ENCODE measurements at regions of chr5 and their contacts with region 1.

Region 1: DNA sequence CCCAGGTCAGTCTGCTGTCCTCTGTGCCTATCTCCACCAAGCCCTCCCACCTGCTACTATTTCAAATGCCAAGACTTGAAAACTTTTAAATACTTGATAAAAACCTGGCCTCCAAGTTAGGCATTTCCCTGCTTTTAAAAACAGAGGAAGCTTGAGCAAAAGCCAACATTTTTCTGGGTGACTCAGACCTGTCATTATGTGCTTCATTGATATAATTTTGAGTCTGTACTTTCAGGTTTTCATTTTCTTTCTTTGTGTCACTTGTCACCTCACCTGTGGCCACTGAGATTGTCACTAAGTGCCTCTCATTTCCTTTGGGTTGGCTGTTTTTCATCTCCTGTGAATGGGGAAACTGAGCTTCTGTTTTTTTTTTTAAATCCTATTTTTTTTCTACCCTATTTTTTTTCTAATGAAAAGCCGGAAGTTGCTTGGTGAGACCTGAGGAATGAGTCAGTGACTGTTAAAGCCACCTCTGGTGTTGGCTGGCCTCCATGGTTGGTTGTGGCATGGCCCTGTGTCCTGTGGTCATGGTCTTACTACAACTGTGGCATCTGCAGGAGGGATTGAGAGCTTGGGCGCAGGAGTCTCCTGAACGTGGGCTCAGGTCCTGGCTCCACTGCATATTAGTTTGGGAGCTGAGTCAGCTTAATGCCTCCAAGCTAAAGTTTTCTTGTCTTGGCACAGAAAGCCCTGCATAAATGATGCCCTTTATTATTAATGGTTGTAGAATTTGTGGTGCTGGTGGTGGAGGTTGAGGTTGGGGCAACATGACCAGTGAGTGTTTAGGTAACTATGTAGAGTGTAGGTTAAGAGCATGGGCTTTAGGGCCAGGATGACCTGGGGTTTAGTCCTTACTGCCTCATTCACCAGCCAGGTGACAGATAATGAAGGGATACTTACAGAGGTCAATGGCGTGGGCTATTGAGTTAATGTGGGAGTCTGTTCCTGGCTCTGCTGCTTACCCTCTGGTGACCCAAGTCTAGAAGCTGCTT is 56.9 kb downstream of the ARHGAP26 start:
- DNase-seq: peak; percentile 67
- H3K4me3 Mint-ChIP-seq: no peak overlapping the region
- H3K27ac Mint-ChIP-seq: peak overlapping the region; percentile 76
- H3K4me1 Mint-ChIP-seq: peaks cover 80% of the 10 kb centered on the region
- H3K27me3 Mint-ChIP-seq: no peaks in the 10 kb centered on the region

Region 2: GRCh38 chr5:142769741-142770631 is 57.1 kb before region 1 on chr5 and contains the start of gene ARHGAP26:
- CTCF ChIA-PET with region 1: interaction called, 9 read pairs
- intact Hi-C with region 1: loop called (anchors 1 kb)
- DNase-seq: peak; percentile 94
- H3K4me3 Mint-ChIP-seq: peak within 1 kb of the TSS; percentile 95
- H3K27ac Mint-ChIP-seq: peak within 1 kb of the TSS; percentile 81
- H3K4me1 Mint-ChIP-seq: peaks cover 37% of the 10 kb centered on the region
- H3K27me3 Mint-ChIP-seq: no peaks in the 10 kb centered on the region
- total RNA-seq, gene ARHGAP26: 17.0 to 19.5 TPM

Region 3: DNA sequence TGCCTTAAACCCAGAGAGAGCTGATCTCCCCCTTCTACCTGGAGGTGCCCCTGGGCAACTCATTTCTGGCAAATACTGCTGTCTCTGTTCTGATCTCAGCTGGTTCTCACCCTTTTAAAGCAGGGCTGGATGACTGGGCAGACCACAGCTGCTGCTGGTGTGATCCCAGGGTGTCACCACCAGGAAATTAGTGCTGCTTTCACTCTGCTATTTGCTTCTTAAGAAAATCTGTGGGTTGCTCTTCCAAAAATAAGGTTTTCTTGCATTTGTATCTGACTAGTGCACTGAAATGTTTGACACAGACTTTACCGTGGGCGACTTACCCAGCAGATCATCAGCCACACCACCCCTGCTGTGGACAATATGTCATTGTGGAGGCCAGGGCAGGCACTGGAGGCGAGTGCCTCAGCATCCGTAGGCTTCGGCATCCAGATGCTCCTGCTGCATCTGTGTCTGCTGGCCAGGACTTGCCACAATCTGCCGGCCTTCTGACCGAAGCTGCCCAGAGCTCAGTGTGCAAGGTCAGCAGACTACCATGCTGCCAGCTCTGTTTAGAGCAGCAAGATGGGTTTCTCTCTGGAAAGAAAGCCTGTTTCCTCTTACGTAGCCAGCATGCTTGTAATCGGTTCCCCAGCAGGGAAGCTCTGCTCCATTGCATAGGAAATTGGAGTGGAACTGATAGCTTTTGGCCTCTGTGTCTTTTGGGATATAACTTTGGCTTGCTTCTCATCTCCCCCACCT is 43.3 kb before region 1 on chr5:
- CTCF ChIA-PET with region 1: interaction called, 4 read pairs
- intact Hi-C with region 1: loop called (anchors 1 kb)
- DNase-seq: peak; percentile 88
- H3K4me3 Mint-ChIP-seq: no peak overlapping the region
- H3K27ac Mint-ChIP-seq: peak overlapping the region; percentile 34
- H3K4me1 Mint-ChIP-seq: peaks cover 62% of the 10 kb centered on the region
- H3K27me3 Mint-ChIP-seq: no peaks in the 10 kb centered on the region

Region 4: DNA sequence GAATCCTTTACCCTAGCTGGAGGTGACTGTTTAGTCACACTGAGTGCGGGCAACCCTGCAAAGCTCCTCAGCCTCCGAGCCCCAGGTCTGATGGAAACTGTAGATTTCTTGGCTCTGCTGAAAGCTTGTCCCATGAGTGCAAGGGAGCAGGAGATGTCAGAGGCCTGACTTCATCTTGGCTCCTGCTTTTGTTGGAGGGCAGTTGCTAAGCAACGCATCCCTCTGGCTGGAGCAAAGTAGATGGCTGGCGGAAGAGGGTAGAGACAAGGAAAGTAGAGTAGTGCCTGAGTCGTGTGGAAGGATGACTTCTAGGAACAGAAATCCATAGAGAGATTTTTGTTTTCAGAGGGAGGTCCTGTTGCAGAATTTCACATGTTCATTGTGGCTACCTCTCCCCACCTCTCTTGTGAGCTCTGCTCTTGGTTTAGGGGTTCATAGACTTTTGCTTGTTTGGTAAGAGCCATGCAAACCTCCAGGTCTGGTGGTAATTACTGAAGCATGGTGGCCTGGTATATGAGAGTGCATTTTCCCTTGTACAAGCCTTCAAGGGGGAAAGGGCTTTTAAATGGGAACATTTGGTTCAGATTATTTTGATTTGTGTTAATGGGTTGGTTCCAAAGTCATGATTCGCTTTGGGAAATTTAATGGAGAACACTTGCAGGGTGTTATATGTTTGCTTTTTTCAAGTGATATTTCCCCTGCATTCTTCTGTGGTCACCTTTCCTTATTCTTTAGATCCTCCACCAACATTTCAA is 14.7 kb after region 1 on chr5:
- CTCF ChIA-PET with region 1: interaction called, 4 read pairs
- intact Hi-C with region 1: loop called (anchors 1 kb)
- DNase-seq: no peak
- H3K4me3 Mint-ChIP-seq: no peak overlapping the region
- H3K27ac Mint-ChIP-seq: no peak overlapping the region
- H3K4me1 Mint-ChIP-seq: peaks cover 25% of the 10 kb centered on the region
- H3K27me3 Mint-ChIP-seq: no peaks in the 10 kb centered on the region

Region 5: GRCh38 chr5:142864725-142865260 is 37.8 kb after region 1 on chr5:
- CTCF ChIA-PET with region 1: interaction called, 5 read pairs
- intact Hi-C with region 1: loop called (anchors 1 kb)
- DNase-seq: no peak
- H3K4me3 Mint-ChIP-seq: no peak overlapping the region
- H3K27ac Mint-ChIP-seq: peak overlapping the region; percentile 89
- H3K4me1 Mint-ChIP-seq: peaks cover 30% of the 10 kb centered on the region
- H3K27me3 Mint-ChIP-seq: no peaks in the 10 kb centered on the region

Measured in activated naive CD4-positive, alpha-beta T cell treated with anti-CD3 and anti-CD28 coated beads for 36 hours (primary cell).